HepG2 (cell line): ENCODE measurements at regions of chr19 and their contacts with region 1.

Region 1: GRCh38 chr19:10251792-10252694 is at the start of gene MRPL4:
- DNase-seq: peak; percentile 99
- ATAC-seq: peak; percentile 96
- H3K4me3 ChIP-seq: peak within 1 kb of the TSS; percentile 64 to 93 (median 88)
- H3K27ac ChIP-seq: peak within 1 kb of the TSS; percentile 80
- H3K4me1 ChIP-seq: peaks cover 42% of the 10 kb centered on the region
- H3K27me3 ChIP-seq: no peaks in the 10 kb centered on the region; a peak in 1 of 5 replicates
- CTCF ChIP-seq: no peak
- EP300 ChIP-seq: peak in 1 of 2 experiments; percentile 27; a peak in 1 of 4 replicates
- POLR2A ChIP-seq: peak; percentile 81 to 87
- RAD21 ChIP-seq: peak; percentile 50
- total RNA-seq, gene MRPL4: 36.7 and 40.6 TPM in 2 replicates

Region 2: DNA sequence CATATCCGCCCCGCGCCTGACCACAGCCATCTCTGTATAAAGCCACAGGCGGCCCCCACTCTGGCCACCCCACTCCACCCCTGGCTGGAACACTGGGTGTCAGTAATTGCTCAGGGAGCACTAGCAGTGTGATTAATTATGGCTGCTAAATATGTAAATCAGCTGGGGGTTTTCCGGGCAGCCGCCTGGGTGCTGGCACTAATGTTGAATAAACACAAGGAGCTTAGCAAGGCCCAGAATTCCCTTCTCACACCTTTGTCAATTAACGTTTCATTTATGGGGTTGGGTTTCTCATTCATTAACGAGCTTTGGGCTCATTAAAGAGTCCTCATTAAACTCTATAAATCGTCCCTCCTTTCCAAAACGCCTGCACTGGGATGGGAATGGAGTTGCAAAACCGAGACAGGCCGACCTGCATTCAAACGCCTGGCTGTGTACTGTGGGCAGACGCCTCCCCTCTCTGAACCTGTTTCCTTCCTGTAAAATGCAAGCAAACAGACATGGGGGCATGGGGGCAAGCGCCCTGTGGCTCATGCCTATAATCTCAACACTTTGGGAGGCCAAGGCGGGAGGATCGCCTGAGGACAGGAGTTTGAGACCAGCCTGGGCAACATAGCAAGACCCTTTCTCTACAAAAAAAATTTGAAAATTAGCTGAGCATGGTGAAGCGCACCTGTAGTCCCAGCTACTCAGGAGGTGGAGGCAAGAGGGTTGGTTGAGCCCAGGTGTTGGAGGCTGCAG is 298.1 kb before region 1 on chr19:
- CTCF ChIA-PET with region 1: no interaction called
- POLR2A ChIA-PET with region 1: no interaction called
- in situ Hi-C with region 1: no loop called
- intact Hi-C with region 1: no loop called
- DNase-seq: no peak
- ATAC-seq: no peak
- H3K4me3 ChIP-seq: no peak overlapping the region
- H3K27ac ChIP-seq: no peak overlapping the region
- H3K4me1 ChIP-seq: no peaks in the 10 kb centered on the region
- H3K27me3 ChIP-seq: peaks cover 0 to 5% of the 10 kb centered on the region in 2 experiments; a peak in 3 of 5 replicates
- CTCF ChIP-seq: no peak
- EP300 ChIP-seq: no peak
- POLR2A ChIP-seq: no peak
- RAD21 ChIP-seq: no peak

Region 3: DNA sequence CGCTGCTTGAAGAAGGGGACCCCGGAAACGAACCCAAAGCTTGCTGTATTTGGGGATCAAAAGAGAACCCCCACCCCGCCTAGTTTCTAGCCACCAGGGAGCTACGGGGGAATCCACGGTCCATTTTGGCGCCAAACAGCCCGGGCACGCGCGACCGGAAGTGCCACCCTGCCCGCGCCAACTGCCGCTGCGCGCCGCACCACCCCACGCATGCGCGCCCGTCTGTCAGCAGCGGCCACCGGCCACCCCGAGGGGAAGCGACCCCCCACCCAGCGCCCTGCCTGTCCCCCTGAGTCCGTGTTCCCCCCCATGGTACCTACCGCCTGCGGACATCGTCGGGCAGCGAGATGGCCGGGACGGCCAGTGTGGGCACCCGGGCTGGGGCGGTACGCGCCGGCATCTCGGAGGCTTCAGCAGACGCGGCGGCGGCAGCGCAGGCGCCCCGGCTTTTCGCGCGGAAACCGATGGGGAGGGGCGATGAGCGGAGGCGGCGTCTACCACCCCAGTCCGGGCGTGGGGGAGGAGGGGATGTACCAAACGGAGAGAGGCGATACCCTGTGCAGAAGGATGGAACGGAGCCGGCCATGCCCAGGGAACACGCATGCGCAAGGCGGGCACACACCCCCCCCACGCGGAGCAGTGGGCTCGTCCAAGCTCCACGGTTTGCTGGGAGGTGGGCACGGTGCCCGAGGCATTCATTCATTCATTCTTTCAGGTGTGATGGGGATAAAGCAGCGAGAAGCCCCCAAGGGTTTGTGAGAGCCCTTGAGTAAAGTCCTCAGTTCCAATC is 57.3 kb before region 1 on chr19 and contains the start of gene DNMT1:
- CTCF ChIA-PET with region 1: no interaction called
- POLR2A ChIA-PET with region 1: interaction called, 4 read pairs
- in situ Hi-C with region 1: no loop called
- intact Hi-C with region 1: loop called (anchors 2 kb)
- DNase-seq: peak; percentile 89
- ATAC-seq: peak; percentile 90
- H3K4me3 ChIP-seq: peak within 1 kb of the TSS; percentile 74 to 81 (median 80)
- H3K27ac ChIP-seq: peak within 1 kb of the TSS; percentile 79
- H3K4me1 ChIP-seq: peaks cover 48% of the 10 kb centered on the region
- H3K27me3 ChIP-seq: no peaks in the 10 kb centered on the region
- CTCF ChIP-seq: no peak
- EP300 ChIP-seq: peak; percentile 10 to 11; a peak in 1 of 4 replicates
- POLR2A ChIP-seq: peak; percentile 82 to 90
- RAD21 ChIP-seq: 0 out of 2 replicates have a peak, but pooled peaks have one; percentile 8
- total RNA-seq, gene DNMT1: 71.3 and 91.1 TPM in 2 replicates

Region 4: DNA sequence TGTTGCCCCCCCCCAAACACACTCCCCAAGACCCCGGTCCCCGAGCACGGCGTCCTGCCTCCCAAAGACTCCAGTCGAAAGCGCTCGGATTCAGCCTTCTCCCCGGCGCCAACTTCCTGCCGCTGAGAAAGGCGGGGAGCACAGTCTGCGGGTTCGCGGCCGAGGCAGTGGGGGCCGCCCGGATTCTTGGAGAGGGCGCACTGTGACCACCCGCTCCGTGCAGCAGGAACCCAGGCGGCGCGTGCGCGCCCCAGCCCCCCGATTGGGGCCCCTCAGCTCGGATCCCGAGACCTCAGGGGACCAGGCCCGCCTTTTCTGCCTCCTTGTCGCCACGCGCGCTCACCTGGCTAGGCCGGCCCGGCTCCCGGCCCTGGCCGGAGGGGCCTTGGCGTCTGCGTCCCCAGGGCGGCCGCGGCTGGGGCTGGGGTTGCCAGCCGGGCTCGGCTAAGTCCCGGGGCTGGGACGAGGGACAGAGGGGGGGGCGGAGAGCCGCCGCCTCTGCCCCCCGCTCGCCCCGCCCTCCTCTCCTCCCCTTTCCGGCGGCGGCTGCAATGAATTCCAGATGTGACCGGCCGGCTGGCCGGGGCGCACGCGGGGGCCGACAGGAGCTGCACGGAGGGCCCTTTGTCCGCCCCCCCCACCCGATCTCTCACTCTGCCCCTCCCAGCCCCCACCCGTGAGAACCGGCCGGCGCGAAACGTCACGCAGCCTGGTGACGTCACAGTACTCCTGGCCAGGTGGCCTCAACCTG is 21.0 kb before region 1 on chr19 and contains the start of gene S1PR2:
- CTCF ChIA-PET with region 1: interaction called, 33 read pairs
- POLR2A ChIA-PET with region 1: interaction called, 7 read pairs
- in situ Hi-C with region 1: no loop called
- intact Hi-C with region 1: loop called (anchors 1 kb)
- DNase-seq: peak; percentile 36
- ATAC-seq: peak; percentile 71
- H3K4me3 ChIP-seq: peak within 1 kb of the TSS; percentile 72 to 77 (median 74)
- H3K27ac ChIP-seq: no peak within 1 kb of the TSS
- H3K4me1 ChIP-seq: peaks cover 40% of the 10 kb centered on the region
- H3K27me3 ChIP-seq: peaks cover 2 to 11% of the 10 kb centered on the region in 2 experiments; a peak in 4 of 5 replicates
- CTCF ChIP-seq: no peak
- EP300 ChIP-seq: no peak
- POLR2A ChIP-seq: no peak
- RAD21 ChIP-seq: no peak
- total RNA-seq, gene S1PR2: 0.93 and 1.3 TPM in 2 replicates

Region 5: DNA sequence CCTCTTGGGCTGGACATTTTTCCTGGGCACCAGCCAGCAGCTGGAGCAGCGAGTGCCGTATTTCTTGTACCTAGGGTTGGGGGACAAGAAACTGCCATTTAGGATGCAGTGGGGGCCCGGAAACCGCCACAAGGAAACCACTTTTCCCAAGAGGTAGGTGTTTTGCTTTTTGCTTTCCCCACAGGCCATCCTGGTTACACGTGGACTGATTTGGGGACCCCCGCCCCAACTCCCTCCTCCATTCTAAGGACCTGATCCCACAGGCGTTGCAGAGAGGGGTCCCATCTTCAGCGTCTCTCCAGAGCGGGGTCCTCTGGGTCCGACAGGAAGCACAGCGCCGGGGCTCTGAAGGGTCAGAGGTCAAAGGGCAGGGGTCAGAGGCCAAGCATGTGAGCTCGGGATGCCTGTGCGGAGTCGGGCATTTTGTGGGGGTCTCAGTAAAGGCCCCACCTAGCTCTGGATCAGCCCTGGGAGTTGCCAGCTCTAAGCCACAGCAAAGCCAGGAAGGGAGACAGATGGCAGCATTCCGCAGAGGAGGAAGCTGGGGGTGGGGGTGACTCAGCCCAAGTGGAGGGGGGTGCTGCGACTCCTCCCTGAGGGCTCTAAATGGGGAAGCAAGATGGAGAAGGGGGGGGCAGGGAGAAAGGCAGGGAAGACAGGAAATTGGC is 53.2 kb after region 1 on chr19:
- CTCF ChIA-PET with region 1: no interaction called
- POLR2A ChIA-PET with region 1: no interaction called
- in situ Hi-C with region 1: no loop called
- intact Hi-C with region 1: no loop called
- DNase-seq: no peak
- ATAC-seq: no peak
- H3K4me3 ChIP-seq: no peak overlapping the region
- H3K27ac ChIP-seq: no peak overlapping the region
- H3K4me1 ChIP-seq: peaks cover 10% of the 10 kb centered on the region
- H3K27me3 ChIP-seq: no peaks in the 10 kb centered on the region
- CTCF ChIP-seq: no peak
- EP300 ChIP-seq: no peak
- POLR2A ChIP-seq: no peak
- RAD21 ChIP-seq: no peak

Region 6: GRCh38 chr19:10380313-10381102 is 128.5 kb after region 1 on chr19 and contains the start of gene TYK2:
- CTCF ChIA-PET with region 1: no interaction called
- POLR2A ChIA-PET with region 1: interaction called, 10 read pairs
- in situ Hi-C with region 1: no loop called
- intact Hi-C with region 1: no loop called
- DNase-seq: peak; percentile 97
- ATAC-seq: peak; percentile 93
- H3K4me3 ChIP-seq: peak within 1 kb of the TSS; percentile 90 to 98 (median 91)
- H3K27ac ChIP-seq: peak within 1 kb of the TSS; percentile 80
- H3K4me1 ChIP-seq: peaks cover 39% of the 10 kb centered on the region
- H3K27me3 ChIP-seq: no peaks in the 10 kb centered on the region; a peak in 1 of 5 replicates
- CTCF ChIP-seq: no peak
- EP300 ChIP-seq: peak in 1 of 2 experiments; percentile 6; a peak in 1 of 4 replicates
- POLR2A ChIP-seq: peak; percentile 79 to 91
- RAD21 ChIP-seq: 0 out of 2 replicates have a peak, but pooled peaks have one; percentile 16
- total RNA-seq, gene TYK2: 39.9 and 60.1 TPM in 2 replicates